Naive thymus-derived CD4-positive, alpha-beta T cell (primary cell): ENCODE measurements at regions of chr7 and their contacts with region 1.

Region 1: DNA sequence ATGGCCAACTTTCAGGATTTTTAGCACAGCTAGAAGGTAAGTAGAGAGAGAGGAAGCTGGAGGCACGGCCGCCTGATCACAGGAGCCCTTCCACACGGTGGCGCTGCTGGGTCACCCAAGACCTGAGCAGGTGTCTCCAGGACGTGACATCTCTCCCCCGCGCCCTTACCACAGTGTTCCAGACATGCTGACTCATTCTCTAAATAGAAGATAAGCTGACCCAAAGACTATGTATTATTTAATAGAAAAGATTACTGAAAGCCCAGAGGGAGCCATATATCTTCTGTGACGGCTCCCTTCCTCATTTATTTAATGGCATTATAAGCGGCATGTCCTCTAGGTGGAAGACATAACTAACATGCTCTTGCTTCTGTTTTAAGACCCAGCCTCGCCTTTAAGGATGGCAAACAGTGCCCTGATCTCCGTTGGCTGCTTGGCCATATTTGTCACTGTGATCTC is 26.0 kb upstream of the MALSU1 start:
- DNase-seq: peak; percentile 64 to 85 (median 80)
- ATAC-seq: peak; percentile 99
- H3K4me3 ChIP-seq: no peak overlapping the region
- H3K4me3 Mint-ChIP-seq: peak overlapping the region; percentile 14 to 82 (median 70)
- H3K27ac ChIP-seq: no peak overlapping the region
- H3K27ac Mint-ChIP-seq: peak overlapping the region in 4 of 9 donors; percentile 3 to 54 (median 23)
- H3K4me1 ChIP-seq: peaks cover 0 to 4% of the 10 kb centered on the region in 2 donors
- H3K4me1 Mint-ChIP-seq: peaks cover 2 to 16% (median 10%) of the 10 kb centered on the region in 7 donors
- H3K27me3 ChIP-seq: no peaks in the 10 kb centered on the region
- H3K27me3 Mint-ChIP-seq: peaks cover 0 to 9% (median 4%) of the 10 kb centered on the region in 5 donors

Region 2: DNA sequence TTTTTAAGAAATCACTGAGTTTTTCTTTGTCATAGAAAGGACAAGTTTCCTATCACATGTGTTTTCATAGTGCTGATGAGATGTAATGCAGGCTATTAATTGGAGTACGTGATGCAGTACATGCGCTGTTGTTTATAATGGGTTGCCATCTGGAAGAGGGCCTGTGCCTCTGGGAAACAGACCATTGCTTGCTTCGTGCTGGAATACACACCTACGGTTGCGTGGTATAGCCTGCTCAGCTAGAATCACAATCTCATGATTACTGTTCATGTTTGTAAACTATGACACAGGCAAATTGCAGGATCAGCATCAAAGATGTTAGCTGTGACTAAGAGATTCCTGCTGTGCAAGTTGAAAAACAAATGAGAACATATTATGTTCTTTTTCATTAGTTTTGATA is 666.0 kb before region 1 on chr7:
- CTCF ChIA-PET with region 1: no interaction called
- POLR2A ChIA-PET with region 1: no interaction called
- intact Hi-C with region 1: no loop called
- DNase-seq: no peak
- ATAC-seq: no peak
- H3K4me3 ChIP-seq: no peak overlapping the region
- H3K4me3 Mint-ChIP-seq: no peak overlapping the region
- H3K27ac ChIP-seq: no peak overlapping the region
- H3K27ac Mint-ChIP-seq: no peak overlapping the region
- H3K4me1 ChIP-seq: no peaks in the 10 kb centered on the region
- H3K4me1 Mint-ChIP-seq: peaks cover 0 to 4% (median 0%) of the 10 kb centered on the region in 7 donors
- H3K27me3 ChIP-seq: no peaks in the 10 kb centered on the region
- H3K27me3 Mint-ChIP-seq: peaks cover 6 to 35% (median 11%) of the 10 kb centered on the region in 5 donors

Region 3: GRCh38 chr7:23216021-23216420 is 57.1 kb before region 1 on chr7:
- CTCF ChIA-PET with region 1: no interaction called
- POLR2A ChIA-PET with region 1: no interaction called
- intact Hi-C with region 1: no loop called
- DNase-seq: no peak
- ATAC-seq: peak; percentile 64
- H3K4me3 ChIP-seq: no peak overlapping the region
- H3K4me3 Mint-ChIP-seq: no peak overlapping the region
- H3K27ac ChIP-seq: no peak overlapping the region
- H3K27ac Mint-ChIP-seq: no peak overlapping the region
- H3K4me1 ChIP-seq: no peaks in the 10 kb centered on the region
- H3K4me1 Mint-ChIP-seq: peaks cover 0 to under 1% (median 0%) of the 10 kb centered on the region in 7 donors
- H3K27me3 ChIP-seq: no peaks in the 10 kb centered on the region
- H3K27me3 Mint-ChIP-seq: peaks cover 4 to 30% (median 9%) of the 10 kb centered on the region in 5 donors

Region 4: DNA sequence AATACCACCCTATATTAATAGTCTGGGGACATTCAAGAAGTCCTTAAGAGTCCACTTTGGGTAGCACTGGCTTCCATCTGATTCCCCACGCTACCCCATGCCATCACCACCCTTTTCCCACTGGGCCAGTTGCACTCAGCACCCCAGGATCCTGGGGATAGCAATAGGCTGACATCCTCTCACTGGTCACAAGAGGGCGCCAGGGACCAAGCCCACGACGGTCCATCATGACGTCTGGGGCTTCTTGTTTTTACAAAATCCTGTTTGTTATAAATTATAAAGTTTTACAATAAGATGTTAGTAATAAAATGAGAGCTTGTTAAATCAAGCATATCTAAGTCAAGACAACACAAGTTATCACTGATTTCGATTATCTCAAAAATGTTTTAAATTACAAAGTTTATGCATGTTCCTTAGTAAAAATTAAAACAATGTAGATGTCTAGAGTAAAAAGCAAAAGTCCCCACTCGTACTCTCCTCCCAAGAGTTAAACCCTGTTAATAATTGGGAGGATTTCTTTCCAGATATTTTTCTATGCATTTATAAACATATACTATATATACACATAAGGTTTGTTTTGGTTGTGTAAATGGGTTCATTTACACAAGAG is 11.2 kb before region 1 on chr7:
- CTCF ChIA-PET with region 1: interaction called, 48 read pairs
- POLR2A ChIA-PET with region 1: no interaction called
- intact Hi-C with region 1: no loop called
- DNase-seq: peak; percentile 18 to 54 (median 43)
- ATAC-seq: peak; percentile 92
- H3K4me3 ChIP-seq: no peak overlapping the region
- H3K4me3 Mint-ChIP-seq: no peak overlapping the region
- H3K27ac ChIP-seq: no peak overlapping the region
- H3K27ac Mint-ChIP-seq: no peak overlapping the region
- H3K4me1 ChIP-seq: peaks cover 0 to 3% of the 10 kb centered on the region in 2 donors
- H3K4me1 Mint-ChIP-seq: no peaks in the 10 kb centered on the region
- H3K27me3 ChIP-seq: no peaks in the 10 kb centered on the region
- H3K27me3 Mint-ChIP-seq: peaks cover 0 to 20% (median 0%) of the 10 kb centered on the region in 5 donors

Region 5: DNA sequence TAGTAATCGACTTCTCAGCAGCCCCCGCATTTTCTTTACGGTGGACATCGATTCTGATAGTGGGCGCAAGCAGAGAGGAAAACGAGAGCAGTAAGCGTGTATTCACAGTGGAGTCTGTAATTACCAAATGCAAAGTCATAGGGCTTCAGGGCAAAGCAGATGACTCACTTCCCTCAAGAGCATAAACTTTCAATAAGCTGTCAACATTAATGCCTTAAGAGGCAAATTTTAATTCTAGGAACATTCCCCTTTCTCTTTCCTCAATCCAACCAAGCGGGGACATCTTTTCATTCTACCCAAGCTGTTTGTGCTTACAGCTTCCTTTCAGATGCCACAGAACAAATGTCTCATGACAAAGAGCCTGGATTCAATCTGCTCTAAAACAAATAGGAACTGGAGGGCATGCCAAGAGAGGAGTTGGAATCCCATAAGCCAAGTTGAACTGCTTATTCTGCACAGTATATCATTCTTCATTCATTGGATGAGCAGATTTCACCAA is 74.6 kb after region 1 on chr7:
- CTCF ChIA-PET with region 1: interaction called, 3 read pairs
- POLR2A ChIA-PET with region 1: interaction called, 3 read pairs
- intact Hi-C with region 1: loop called in 1 of 2 experiments (anchors 5 kb)
- DNase-seq: no peak
- ATAC-seq: peak; percentile 66
- H3K4me3 ChIP-seq: no peak overlapping the region
- H3K4me3 Mint-ChIP-seq: peak overlapping the region in 7 of 10 donors; percentile 63 to 87 (median 83)
- H3K27ac ChIP-seq: no peak overlapping the region
- H3K27ac Mint-ChIP-seq: peak overlapping the region in 6 of 9 donors; percentile 57 to 94 (median 80)
- H3K4me1 ChIP-seq: peaks cover 6 to 11% of the 10 kb centered on the region in 2 donors
- H3K4me1 Mint-ChIP-seq: peaks cover 9 to 36% (median 24%) of the 10 kb centered on the region in 7 donors
- H3K27me3 ChIP-seq: no peaks in the 10 kb centered on the region
- H3K27me3 Mint-ChIP-seq: peaks cover 0 to 39% (median 0%) of the 10 kb centered on the region in 5 donors

Region 6: GRCh38 chr7:23462846-23463245 is 189.7 kb after region 1 on chr7:
- CTCF ChIA-PET with region 1: interaction called, 8 read pairs
- POLR2A ChIA-PET with region 1: no interaction called
- intact Hi-C with region 1: loop called (anchors 1 kb)
- DNase-seq: peak in 1 of 9 donors; percentile 10
- ATAC-seq: peak; percentile 48
- H3K4me3 ChIP-seq: no peak overlapping the region
- H3K4me3 Mint-ChIP-seq: no peak overlapping the region
- H3K27ac ChIP-seq: no peak overlapping the region
- H3K27ac Mint-ChIP-seq: peak overlapping the region in 1 of 9 donors; percentile 23
- H3K4me1 ChIP-seq: peaks cover 0 to 7% of the 10 kb centered on the region in 2 donors
- H3K4me1 Mint-ChIP-seq: peaks cover 4 to 22% (median 9%) of the 10 kb centered on the region in 7 donors
- H3K27me3 ChIP-seq: peaks cover 9 to 14% of the 10 kb centered on the region in 2 donors
- H3K27me3 Mint-ChIP-seq: peaks cover 56 to 81% (median 64%) of the 10 kb centered on the region in 5 donors

Region 7: DNA sequence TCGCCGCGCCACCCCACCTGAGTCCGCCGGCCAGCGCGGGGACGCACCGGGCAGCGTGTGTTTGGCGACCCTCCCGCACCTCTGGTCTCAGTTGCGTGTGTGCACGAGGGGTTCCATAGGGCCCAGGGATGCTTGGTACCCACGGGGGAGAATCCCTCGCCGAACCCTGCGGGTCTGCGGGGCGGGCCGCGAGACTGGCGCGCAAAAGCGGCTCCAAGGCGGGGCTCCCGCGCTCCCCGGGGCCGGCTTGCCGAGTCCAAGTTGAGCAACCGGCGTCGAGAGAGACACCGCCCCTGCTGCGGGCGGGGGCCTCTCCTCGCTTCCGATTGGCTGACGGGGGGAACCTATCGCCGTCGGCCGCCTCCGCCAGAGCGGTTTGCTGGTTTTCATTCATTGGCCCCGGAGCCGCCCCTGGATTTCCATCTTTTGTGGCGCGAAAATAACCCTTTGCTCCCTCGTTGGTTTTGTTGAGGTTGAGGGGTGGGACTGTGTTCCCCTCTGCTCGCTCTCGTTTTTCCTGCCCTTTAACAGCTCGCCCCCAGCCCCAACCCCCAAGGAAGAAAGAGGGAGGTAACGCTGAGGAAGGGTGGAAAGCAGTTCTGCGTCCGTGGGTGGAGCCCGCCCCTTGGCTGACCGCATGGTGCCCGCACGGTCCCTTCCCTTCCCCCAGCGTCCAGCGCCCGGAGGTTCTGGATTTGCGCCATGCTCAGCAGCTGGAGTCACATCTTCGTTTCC is 201.1 kb after region 1 on chr7:
- CTCF ChIA-PET with region 1: interaction called, 5 read pairs
- POLR2A ChIA-PET with region 1: no interaction called
- intact Hi-C with region 1: loop called in 1 of 2 experiments (anchors 2 kb)
- DNase-seq: peak in 6 of 9 donors; percentile 13 to 90 (median 26)
- ATAC-seq: peak; percentile 80
- H3K4me3 ChIP-seq: no peak overlapping the region
- H3K4me3 Mint-ChIP-seq: peak overlapping the region; percentile 13 to 85 (median 54)
- H3K27ac ChIP-seq: no peak overlapping the region
- H3K27ac Mint-ChIP-seq: peak overlapping the region in 5 of 9 donors; percentile 21 to 70 (median 69)
- H3K4me1 ChIP-seq: peaks cover 12 to 22% of the 10 kb centered on the region in 2 donors
- H3K4me1 Mint-ChIP-seq: peaks cover 17 to 35% (median 29%) of the 10 kb centered on the region in 7 donors
- H3K27me3 ChIP-seq: peaks cover 78 to 85% of the 10 kb centered on the region in 2 donors
- H3K27me3 Mint-ChIP-seq: peaks cover 67 to 75% (median 70%) of the 10 kb centered on the region in 5 donors

Region 8: DNA sequence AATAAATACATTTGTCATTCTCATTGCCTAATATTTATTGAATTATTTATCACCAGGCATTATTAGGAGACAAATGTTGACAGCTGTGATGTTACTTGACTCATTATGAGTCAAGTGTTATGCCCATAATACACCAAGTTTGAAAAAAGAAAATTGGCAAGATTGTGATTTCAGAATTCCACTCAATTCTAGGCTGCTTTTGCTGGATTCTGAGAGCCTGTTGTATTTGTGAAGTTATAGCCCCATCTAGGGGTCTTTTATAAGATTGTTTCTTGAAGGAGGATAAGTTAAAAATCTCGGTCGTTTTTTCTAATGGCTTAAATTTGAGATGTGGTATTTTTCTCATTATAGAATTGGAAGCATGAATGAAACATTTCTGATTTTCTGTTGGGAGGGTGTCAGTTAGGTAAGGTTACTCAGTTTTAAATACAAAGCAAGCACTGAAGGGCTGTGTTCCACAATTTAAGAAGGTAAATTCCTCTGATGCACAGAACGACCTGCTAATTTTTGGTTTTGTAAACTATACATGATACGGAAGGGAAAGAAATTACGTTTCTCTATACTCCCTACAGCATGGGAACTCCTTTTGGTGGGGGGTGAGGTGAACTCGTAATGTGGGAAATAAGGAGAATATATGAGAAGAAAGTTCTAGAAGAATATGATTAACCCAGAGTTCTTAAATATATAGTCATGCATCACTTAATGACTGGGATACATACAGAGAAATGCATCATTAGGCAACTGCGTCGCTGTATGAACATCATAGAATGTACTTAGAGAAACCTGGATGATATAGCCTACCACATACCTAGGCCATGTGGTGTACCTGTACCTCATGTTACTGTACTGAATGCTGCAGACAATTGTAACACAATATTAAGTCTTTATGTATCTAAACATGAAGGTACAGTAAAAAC is 439.5 kb after region 1 on chr7:
- CTCF ChIA-PET with region 1: interaction called, 6 read pairs
- POLR2A ChIA-PET with region 1: interaction called, 4 read pairs
- intact Hi-C with region 1: loop called (anchors 1 kb)
- DNase-seq: peak in 7 of 9 donors; percentile 11 to 48 (median 37)
- ATAC-seq: peak; percentile 45
- H3K4me3 ChIP-seq: no peak overlapping the region
- H3K4me3 Mint-ChIP-seq: no peak overlapping the region
- H3K27ac ChIP-seq: no peak overlapping the region
- H3K27ac Mint-ChIP-seq: no peak overlapping the region
- H3K4me1 ChIP-seq: no peaks in the 10 kb centered on the region
- H3K4me1 Mint-ChIP-seq: peaks cover 0 to 2% (median 0%) of the 10 kb centered on the region in 7 donors
- H3K27me3 ChIP-seq: no peaks in the 10 kb centered on the region
- H3K27me3 Mint-ChIP-seq: peaks cover 0 to 4% (median 0%) of the 10 kb centered on the region in 5 donors